OCI-LY7 (cell line): ENCODE measurements at regions of chr12 and their contacts with region 1.

Region 1: GRCh38 chr12:121773011-121773777 is 20.3 kb downstream of the RHOF start:
- DNase-seq: peak; percentile 89
- H3K4me3 ChIP-seq: no peak overlapping the region
- H3K27ac ChIP-seq: no peak overlapping the region
- H3K4me1 ChIP-seq: peaks cover 29% of the 10 kb centered on the region
- CTCF ChIP-seq: peak; percentile 90

Region 2: GRCh38 chr12:121600702-121601336 is 172.4 kb before region 1 on chr12:
- CTCF ChIA-PET with region 1: no interaction called
- POLR2A ChIA-PET with region 1: no interaction called
- intact Hi-C with region 1: no loop called
- DNase-seq: no peak
- H3K4me3 ChIP-seq: no peak overlapping the region
- H3K27ac ChIP-seq: no peak overlapping the region
- H3K4me1 ChIP-seq: no peaks in the 10 kb centered on the region
- CTCF ChIP-seq: no peak

Region 3: DNA sequence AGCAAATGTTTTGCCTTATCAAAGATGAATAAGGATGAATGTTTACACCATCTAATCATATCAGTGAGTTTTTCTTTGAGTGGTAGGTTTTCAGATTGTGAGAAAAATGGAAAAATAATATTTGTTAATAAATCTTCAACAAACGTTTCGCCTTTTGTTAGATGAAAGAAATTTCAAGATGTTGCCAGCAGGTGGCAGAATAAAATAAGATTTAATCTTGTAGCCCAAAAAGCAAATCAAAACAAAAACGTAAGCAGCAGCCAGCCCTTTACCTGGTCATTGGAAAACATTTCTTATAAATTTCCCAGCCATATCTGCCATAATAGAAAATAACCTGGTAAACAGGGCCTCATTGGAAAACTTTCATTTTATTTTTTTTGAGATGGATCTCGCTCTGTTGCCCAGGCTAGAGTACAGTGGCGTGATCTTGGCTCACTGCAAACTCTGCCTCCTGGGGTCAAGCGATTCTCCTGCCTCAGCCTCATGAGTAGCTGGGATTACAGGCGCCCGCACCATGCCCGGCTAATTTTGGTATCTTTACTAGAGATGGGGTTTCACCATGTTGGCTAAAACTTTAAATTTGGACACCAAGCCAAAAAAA is 76.0 kb before region 1 on chr12:
- CTCF ChIA-PET with region 1: interaction called, 4 read pairs
- POLR2A ChIA-PET with region 1: no interaction called
- intact Hi-C with region 1: loop called (anchors 1 kb)
- DNase-seq: peak; percentile 77
- H3K4me3 ChIP-seq: no peak overlapping the region
- H3K27ac ChIP-seq: no peak overlapping the region
- H3K4me1 ChIP-seq: no peaks in the 10 kb centered on the region
- CTCF ChIP-seq: peak; percentile 90